Activated B cell treated with CpG ODN at 0.5 μM for 24 hours (primary cell): ENCODE measurements at regions of chr16 and their contacts with region 1.

Region 1: DNA sequence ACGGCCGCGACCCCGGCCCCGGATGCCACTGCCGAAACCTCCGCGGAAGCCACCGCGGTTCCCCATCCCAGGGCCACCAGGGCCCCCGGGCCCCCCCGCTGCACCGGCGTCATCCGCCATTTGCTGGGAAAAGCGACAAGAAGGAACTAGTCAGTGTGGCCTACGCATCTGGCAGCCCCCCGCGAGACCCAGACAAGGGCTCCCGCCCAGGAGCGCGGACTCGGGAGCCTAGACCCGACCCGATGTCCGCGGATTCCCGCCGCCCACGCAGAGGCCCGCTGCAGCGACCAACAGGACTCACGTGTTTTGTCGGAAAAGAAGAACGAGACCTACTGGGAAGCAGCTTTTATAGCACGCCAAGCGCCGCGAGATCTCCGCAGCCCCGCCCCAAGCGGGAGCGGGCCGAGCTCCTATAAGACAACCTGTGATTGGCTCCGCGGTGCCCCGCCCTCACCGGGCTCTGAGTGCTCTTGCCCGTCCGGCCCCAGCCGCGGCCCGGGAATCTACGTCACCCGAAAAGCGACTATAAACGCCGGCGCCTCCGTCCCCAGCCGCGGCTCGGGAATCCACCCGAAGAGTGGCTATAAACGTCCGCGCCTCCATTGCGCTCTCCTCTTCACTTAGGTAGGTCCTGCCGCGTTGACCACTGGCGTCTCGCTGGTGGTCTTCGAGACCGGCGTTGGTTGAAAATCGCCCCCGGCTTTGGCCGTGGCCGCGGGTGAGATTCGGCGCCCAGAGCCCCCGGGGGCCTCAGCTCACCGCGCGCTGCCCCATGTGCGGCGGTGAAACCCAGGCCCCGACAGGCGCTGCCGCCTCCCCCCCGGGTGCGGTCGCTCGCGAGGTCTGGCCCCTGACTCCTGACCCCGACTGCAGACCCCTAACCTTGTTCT is at the start of gene RPS2:
- DNase-seq: peak; percentile 95
- ATAC-seq: peak; percentile 93
- H3K4me3 Mint-ChIP-seq: peak within 1 kb of the TSS; percentile 92
- H3K27ac Mint-ChIP-seq: peak within 1 kb of the TSS; percentile 94
- H3K4me1 Mint-ChIP-seq: peaks cover 50% of the 10 kb centered on the region
- H3K27me3 Mint-ChIP-seq: no peaks in the 10 kb centered on the region
- CTCF ChIP-seq: no peak
- total RNA-seq, gene RPS2: 5,116 and 5,913 TPM in 2 replicates

Region 2: DNA sequence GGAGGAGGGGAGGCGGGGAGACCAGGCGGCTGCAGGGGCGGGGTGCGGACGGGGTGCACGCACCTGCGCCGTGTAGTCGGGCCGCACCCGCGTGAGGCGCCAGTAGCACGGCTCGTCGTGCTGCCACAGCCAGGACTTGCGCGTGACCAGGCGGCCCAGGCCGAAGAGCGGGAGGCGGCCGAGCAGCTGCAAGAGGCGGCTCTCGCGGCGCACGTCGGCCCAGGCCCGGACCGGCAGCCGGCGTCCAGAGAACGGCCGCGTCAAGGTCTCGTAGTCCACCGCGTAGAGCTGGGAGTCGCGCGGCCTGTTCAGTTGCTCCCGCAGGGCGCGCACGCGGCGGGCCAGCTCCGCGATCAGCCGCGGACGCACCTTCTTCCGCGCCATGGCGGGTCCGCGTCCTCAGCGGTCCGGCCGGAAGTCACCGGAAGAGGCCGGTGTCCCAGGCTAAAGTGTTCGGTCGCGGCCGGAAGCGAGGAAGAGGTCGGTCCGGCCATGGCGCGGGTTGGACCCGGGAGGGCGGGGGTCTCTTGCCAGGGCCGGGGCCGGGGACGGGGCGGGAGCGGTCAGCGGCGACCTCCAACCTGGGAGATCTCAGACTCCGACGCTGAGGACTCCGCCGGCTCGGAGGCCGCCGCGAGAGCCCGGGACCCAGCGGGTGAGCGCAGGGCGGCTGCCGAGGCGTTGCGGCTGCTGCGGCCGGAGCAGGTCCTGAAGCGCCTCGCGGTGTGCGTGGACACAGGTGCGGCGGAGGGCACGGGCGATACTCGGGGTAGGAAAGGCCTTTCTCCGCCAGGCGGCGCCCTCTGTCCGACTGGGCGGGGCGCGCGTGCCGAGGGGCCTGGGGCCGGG is 191.8 kb before region 1 on chr16 and contains the starts of genes EME2 and MRPS34:
- CTCF ChIA-PET with region 1: no interaction called
- POLR2A ChIA-PET with region 1: interaction called, 14 read pairs
- intact Hi-C with region 1: no loop called
- DNase-seq: peak; percentile 81
- ATAC-seq: peak; percentile 58
- H3K4me3 Mint-ChIP-seq: peak within 1 kb of the TSS; percentile 87
- H3K27ac Mint-ChIP-seq: peak within 1 kb of the TSS; percentile 89
- H3K4me1 Mint-ChIP-seq: peaks cover 24% of the 10 kb centered on the region
- H3K27me3 Mint-ChIP-seq: no peaks in the 10 kb centered on the region
- CTCF ChIP-seq: peak; percentile 50
- total RNA-seq, gene EME2: 37.1 and 49.9 TPM in 2 replicates
- total RNA-seq, gene MRPS34: 60.9 and 65.1 TPM in 2 replicates

Region 3: DNA sequence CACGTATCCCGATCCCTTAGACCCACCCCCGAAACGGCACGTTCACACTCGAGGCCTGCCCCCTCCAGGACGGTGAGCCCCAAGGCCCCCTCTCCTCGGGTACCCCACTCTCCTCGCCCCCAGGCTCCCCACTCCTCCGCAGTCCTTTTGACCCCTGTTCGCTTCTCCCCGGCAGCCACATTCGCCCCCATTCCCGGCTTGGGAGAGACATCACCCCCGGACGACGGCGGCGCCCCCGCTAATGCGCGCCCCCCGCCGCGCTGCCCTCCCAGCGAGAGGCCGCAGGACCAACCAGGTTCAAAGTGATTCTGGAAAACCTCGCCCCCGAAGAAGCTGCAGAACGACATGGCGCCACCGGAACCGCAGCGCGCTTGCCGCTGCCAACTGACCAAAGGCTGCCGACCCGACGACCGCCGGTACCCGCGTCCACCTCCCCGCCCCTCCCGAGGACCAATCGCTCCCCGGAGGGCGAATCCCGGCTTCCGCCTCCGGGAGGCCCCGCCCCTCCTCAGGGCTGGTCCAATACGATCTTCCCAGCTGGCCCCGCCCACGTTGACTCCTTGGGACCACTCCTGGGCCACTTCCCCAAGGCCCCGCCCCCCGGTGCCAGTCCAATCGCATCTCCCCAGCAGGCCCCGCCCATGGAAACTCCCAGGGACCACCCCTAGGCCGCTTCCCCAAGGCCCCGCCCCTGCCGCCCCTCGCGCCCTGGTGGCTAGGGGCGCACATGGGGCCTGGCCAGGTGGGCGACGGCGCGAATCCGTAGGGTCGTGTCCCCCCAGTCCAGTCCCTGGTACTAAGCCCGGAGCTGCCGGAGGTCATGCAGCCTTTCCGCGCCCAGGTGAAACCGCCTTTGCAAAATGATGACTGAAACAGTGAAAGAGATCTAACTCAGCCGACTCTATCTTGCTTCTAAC is 21.7 kb before region 1 on chr16 and contains the start of gene MSRB1:
- CTCF ChIA-PET with region 1: no interaction called
- POLR2A ChIA-PET with region 1: interaction called, 44 read pairs
- intact Hi-C with region 1: loop called (anchors 1 kb)
- DNase-seq: peak; percentile 99
- ATAC-seq: peak; percentile 98
- H3K4me3 Mint-ChIP-seq: peak within 1 kb of the TSS; percentile 87
- H3K27ac Mint-ChIP-seq: peak within 1 kb of the TSS; percentile 74
- H3K4me1 Mint-ChIP-seq: peaks cover 30% of the 10 kb centered on the region
- H3K27me3 Mint-ChIP-seq: no peaks in the 10 kb centered on the region
- CTCF ChIP-seq: no peak
- total RNA-seq, gene MSRB1: 14.7 and 16.6 TPM in 2 replicates

Region 4: DNA sequence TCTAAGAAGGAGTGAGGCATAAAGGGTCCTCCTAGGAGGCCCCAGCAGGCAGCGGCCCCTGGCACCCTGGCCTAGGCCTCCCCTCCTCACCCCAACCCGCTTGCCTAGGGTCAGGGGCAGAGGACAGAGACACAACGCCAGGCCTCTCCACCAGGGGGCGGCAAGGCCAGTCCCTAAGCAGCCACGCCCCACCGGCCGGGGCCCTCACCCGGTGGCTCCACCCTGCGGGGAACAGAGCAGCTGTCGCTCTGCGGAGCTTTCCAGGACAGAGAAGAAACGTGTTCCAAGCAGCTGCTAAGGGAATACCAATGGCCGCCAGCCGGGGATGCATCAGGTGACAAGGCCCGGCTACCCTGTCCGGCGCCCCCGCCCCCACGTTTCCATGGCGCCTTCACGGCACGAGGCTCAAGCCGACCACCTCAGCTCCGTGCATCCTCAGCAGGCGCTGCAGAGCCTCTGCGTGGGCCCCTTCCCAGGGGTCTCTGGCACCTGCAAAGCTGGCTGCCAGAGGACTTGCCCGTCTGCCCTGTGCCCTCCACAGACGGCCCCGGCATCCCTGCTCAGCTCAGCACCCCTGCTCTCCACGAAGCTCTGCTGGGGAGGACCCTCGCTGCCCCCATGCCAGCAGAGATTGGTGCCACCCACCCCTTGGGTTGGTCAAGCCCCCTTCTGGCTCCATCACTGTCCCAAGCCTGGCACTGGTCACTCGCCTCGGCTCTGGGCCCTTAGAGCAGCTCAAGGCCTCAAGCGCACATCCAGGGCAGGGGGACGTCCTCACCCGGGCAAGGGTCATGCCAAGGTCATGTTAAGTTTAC is 39.3 kb after region 1 on chr16:
- CTCF ChIA-PET with region 1: interaction called, 3 read pairs
- POLR2A ChIA-PET with region 1: interaction called, 19 read pairs
- intact Hi-C with region 1: loop called (anchors 2 kb)
- DNase-seq: peak; percentile 80
- ATAC-seq: peak; percentile 99
- H3K4me3 Mint-ChIP-seq: no peak overlapping the region
- H3K27ac Mint-ChIP-seq: no peak overlapping the region
- H3K4me1 Mint-ChIP-seq: peaks cover 38% of the 10 kb centered on the region
- H3K27me3 Mint-ChIP-seq: no peaks in the 10 kb centered on the region
- CTCF ChIP-seq: peak; percentile 47

Region 5: DNA sequence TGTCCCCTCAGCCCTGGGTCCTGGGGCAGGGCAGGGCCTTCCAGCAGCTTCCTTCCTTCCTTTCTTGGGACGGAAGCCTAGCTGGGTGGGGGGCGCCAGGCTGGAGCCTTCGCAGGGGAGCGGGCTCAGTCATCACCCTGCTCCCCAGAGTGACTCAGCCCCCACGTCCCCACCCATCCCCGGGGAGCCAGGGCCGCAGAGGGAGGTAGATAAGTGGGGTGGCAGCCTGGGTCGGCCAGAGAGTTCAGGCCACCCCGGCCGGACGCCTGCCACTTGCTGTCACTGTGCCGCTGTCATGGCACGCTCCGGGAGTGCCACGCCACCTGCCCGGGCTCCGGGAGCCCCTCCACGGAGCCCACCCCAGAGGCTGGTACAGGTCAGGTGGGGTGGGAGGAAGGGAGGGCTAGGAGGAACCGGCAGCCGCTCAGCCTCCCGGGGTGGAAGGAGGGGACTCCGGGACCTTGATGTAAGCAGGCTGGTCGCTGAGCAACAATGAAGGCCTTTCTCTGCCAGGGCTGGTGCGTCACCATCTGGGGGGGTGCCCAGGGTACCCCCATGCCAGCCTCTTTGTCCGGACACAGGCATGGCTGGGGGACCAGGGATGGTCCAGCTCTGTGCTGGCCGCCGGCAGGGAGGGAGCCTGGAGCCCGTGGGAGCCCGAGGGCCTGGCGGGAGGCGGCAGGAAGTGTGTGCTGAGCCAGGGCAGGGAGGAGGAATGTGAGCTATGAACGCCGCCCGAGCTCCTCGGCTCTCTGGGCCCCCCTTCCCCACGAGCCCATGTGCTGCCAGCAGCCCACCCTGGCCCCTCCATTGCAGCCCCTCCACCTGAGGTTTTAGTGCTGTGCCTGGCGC is 68.5 kb after region 1 on chr16:
- CTCF ChIA-PET with region 1: no interaction called
- POLR2A ChIA-PET with region 1: no interaction called
- intact Hi-C with region 1: no loop called
- DNase-seq: no peak
- ATAC-seq: peak; percentile 45
- H3K4me3 Mint-ChIP-seq: no peak overlapping the region
- H3K27ac Mint-ChIP-seq: no peak overlapping the region
- H3K4me1 Mint-ChIP-seq: peaks cover 2% of the 10 kb centered on the region
- H3K27me3 Mint-ChIP-seq: peaks cover 6% of the 10 kb centered on the region
- CTCF ChIP-seq: no peak

Region 6: DNA sequence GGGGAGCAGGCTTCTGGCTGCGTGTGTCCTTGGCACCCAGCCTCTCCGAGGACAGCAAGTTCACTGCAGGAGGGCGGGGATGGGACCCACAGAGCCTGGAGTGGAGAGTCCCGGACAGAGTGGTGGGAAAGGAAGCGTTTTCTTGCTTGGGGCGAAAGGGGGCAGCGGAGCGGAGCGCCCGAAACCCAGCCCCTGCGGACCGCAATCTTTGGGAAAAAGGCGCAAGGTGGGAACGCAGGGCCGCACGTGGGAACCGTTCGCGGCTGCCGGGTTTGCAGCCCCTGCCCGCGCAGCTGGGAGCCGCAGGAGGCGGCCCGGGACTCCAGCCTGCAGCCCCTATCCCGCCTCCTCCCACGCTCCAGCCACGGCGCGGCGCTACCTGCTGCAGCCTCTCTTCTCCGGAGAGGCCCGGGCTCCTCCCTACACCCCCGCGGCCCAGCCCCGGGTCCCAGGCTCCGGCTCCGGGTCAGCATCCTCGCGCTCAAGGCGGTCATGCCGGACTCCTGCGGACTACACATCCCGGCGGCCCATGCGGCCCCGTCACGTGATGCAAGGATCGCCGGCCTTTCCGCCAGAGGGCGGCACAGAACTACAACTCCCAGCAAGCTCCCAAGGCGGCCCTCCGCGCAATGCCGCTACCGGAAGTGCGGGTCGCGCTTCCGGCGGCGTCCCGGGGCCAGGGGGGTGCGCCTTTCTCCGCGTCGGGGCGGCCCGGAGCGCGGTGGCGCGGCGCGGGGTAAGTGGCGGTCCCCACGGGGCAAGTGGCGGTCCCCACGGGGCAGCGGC is 82.8 kb after region 1 on chr16 and contains the starts of genes NTHL1 and TSC2:
- CTCF ChIA-PET with region 1: no interaction called
- POLR2A ChIA-PET with region 1: interaction called, 12 read pairs
- intact Hi-C with region 1: loop called (anchors 1 kb)
- DNase-seq: peak; percentile 93
- ATAC-seq: peak; percentile 95
- H3K4me3 Mint-ChIP-seq: peak within 1 kb of the TSS; percentile 89
- H3K27ac Mint-ChIP-seq: peak within 1 kb of the TSS; percentile 66
- H3K4me1 Mint-ChIP-seq: peaks cover 24% of the 10 kb centered on the region
- H3K27me3 Mint-ChIP-seq: no peaks in the 10 kb centered on the region
- CTCF ChIP-seq: no peak
- total RNA-seq, gene NTHL1: 10.5 and 11.5 TPM in 2 replicates
- total RNA-seq, gene TSC2: 130 and 139 TPM in 2 replicates

Region 7: GRCh38 chr16:2267913-2268666 is 303.3 kb after region 1 on chr16 and contains the start of gene RNPS1:
- CTCF ChIA-PET with region 1: no interaction called
- POLR2A ChIA-PET with region 1: interaction called, 5 read pairs
- intact Hi-C with region 1: loop called (anchors 5 kb)
- DNase-seq: peak; percentile 98
- ATAC-seq: peak; percentile 91
- H3K4me3 Mint-ChIP-seq: peak within 1 kb of the TSS; percentile 93
- H3K27ac Mint-ChIP-seq: peak within 1 kb of the TSS; percentile 98
- H3K4me1 Mint-ChIP-seq: peaks cover 43% of the 10 kb centered on the region
- H3K27me3 Mint-ChIP-seq: no peaks in the 10 kb centered on the region
- CTCF ChIP-seq: no peak
- total RNA-seq, gene RNPS1: 228 and 232 TPM in 2 replicates